CD8-positive, alpha-beta T cell (primary cell): ENCODE measurements at regions of chr7 and their contacts with region 1.

Region 1: DNA sequence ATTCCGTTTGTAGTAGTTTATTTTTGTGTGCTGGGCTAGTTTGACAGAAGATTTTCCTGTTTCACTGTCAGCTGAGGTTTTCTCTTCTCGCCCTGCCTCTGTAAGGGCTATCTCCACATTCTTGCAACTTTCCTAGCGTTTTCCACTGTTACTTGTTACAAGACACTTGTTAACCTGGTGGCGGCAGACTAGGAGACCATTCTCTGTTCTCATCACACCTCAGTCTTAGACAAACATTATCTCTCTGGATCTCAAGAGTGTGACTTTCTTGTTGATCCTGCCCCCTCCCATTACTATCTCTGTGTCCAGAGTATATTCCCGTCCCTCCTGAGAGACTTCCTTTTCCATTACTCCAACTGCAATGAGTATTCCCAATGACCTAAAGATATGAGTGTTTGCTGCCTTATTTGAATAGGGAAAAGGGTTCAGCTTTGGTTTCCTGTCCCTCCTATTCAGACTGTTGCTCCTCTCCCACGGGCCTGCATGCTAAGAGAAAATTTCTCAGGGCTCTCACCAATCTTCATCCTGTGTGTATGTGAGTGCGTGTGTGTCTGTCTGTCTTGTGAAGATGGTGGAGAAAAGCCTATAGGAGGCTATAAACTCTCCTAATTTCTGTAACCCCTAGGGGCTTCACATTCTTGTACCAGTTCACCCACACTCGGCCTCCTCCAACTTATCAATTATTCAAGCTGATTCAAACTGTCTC is 722.4 kb upstream of the POT1 start:
- DNase-seq: no peak
- ATAC-seq: no peak
- H3K4me3 ChIP-seq: no peak overlapping the region
- H3K4me3 Mint-ChIP-seq: no peak overlapping the region
- H3K27ac ChIP-seq: no peak overlapping the region
- H3K27ac Mint-ChIP-seq: no peak overlapping the region
- H3K4me1 ChIP-seq: no peaks in the 10 kb centered on the region
- H3K4me1 Mint-ChIP-seq: no peaks in the 10 kb centered on the region
- H3K27me3 ChIP-seq: no peaks in the 10 kb centered on the region
- H3K27me3 Mint-ChIP-seq: no peaks in the 10 kb centered on the region
- CTCF ChIP-seq: no peak

Region 2: GRCh38 chr7:126140858-126141466 is 489.0 kb after region 1 on chr7:
- CTCF ChIA-PET with region 1: no interaction called
- POLR2A ChIA-PET with region 1: no interaction called
- intact Hi-C with region 1: loop called in 1 of 2 experiments (anchors 10 kb)
- DNase-seq: no peak
- ATAC-seq: no peak
- H3K4me3 ChIP-seq: no peak overlapping the region
- H3K4me3 Mint-ChIP-seq: no peak overlapping the region
- H3K27ac ChIP-seq: no peak overlapping the region
- H3K27ac Mint-ChIP-seq: no peak overlapping the region
- H3K4me1 ChIP-seq: no peaks in the 10 kb centered on the region
- H3K4me1 Mint-ChIP-seq: no peaks in the 10 kb centered on the region
- H3K27me3 ChIP-seq: no peaks in the 10 kb centered on the region
- H3K27me3 Mint-ChIP-seq: no peaks in the 10 kb centered on the region
- CTCF ChIP-seq: no peak